K562 (cell line): ENCODE measurements at regions of chr1 and their contacts with region 1.

Region 1: DNA sequence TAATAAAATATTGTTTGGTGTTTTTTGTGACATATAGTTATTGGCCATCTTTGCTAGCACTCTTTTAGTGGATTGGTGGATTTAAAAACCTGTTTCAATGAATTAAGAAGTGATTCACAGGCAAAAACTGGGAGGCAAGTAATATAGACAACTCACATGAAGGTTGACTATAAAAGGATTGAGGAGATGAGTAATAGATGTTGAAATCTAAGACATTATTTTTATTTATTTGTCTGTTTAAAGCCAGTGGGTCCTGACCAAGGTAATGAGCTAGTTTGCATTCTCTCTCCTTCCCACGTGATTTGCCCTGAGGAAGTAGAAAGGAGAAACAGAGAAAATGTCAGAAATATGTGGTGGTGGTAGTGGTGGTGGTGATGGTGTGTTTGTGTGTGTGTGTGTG is 351.5 kb upstream of the ZP4 start:
- DNase-seq: no peak
- ATAC-seq: no peak
- H3K4me3 ChIP-seq: no peak overlapping the region
- H3K27ac ChIP-seq: no peak overlapping the region
- H3K4me1 ChIP-seq: no peaks in the 10 kb centered on the region
- H3K27me3 ChIP-seq: no peaks in the 10 kb centered on the region
- CTCF ChIP-seq: no peak
- EP300 ChIP-seq: no peak
- POLR2A ChIP-seq: no peak
- RAD21 ChIP-seq: no peak

Region 2: DNA sequence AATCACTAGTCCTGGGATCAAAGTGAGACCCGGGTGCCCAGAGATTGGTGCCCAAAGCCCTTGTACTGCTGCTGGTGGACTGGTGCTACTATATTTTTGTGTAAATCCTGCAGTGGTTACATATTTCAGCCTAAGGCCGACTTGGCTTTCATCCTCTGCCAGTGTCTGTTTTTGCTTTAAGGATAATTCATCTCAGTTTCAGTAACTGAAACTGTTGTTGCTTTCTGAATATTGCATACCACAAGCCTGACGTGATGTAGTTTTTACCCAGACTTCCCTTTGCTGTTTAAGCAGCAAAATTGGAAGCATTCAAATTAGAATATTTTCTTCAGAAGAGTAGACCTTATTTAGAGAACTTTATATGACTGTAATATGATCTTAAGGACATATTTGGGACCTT is 858.4 kb before region 1 on chr1:
- CTCF ChIA-PET with region 1: no interaction called
- POLR2A ChIA-PET with region 1: no interaction called
- in situ Hi-C with region 1: no loop called
- intact Hi-C with region 1: no loop called
- DNase-seq: no peak
- ATAC-seq: no peak
- H3K4me3 ChIP-seq: no peak overlapping the region
- H3K27ac ChIP-seq: no peak overlapping the region
- H3K4me1 ChIP-seq: no peaks in the 10 kb centered on the region
- H3K27me3 ChIP-seq: no peaks in the 10 kb centered on the region
- CTCF ChIP-seq: no peak
- EP300 ChIP-seq: no peak
- POLR2A ChIP-seq: no peak
- RAD21 ChIP-seq: no peak

Region 3: GRCh38 chr1:237701534-237701933 is 540.6 kb before region 1 on chr1:
- CTCF ChIA-PET with region 1: no interaction called
- POLR2A ChIA-PET with region 1: no interaction called
- in situ Hi-C with region 1: no loop called
- intact Hi-C with region 1: loop called (anchors 5 kb)
- DNase-seq: no peak
- ATAC-seq: no peak
- H3K4me3 ChIP-seq: no peak overlapping the region
- H3K27ac ChIP-seq: no peak overlapping the region
- H3K4me1 ChIP-seq: no peaks in the 10 kb centered on the region
- H3K27me3 ChIP-seq: no peaks in the 10 kb centered on the region
- CTCF ChIP-seq: no peak
- EP300 ChIP-seq: no peak
- POLR2A ChIP-seq: no peak
- RAD21 ChIP-seq: no peak

Region 4: GRCh38 chr1:238982736-238983135 is 740.6 kb after region 1 on chr1:
- CTCF ChIA-PET with region 1: no interaction called
- POLR2A ChIA-PET with region 1: no interaction called
- in situ Hi-C with region 1: no loop called
- intact Hi-C with region 1: no loop called
- DNase-seq: no peak
- ATAC-seq: no peak
- H3K4me3 ChIP-seq: no peak overlapping the region
- H3K27ac ChIP-seq: no peak overlapping the region
- H3K4me1 ChIP-seq: no peaks in the 10 kb centered on the region
- H3K27me3 ChIP-seq: no peaks in the 10 kb centered on the region
- CTCF ChIP-seq: no peak
- EP300 ChIP-seq: no peak
- POLR2A ChIP-seq: no peak
- RAD21 ChIP-seq: no peak